ENCODE measurements at regions of chr1 and their contacts with region 1.

Region 1: GRCh38 chr1:93680757-93681550 is 683 bp downstream of the BCAR3 start:
- DNase-seq: peak; percentile 82
- ATAC-seq: peak; percentile 34
- H3K4me3 ChIP-seq: peak overlapping the region; percentile 95
- H3K27ac ChIP-seq: peak overlapping the region; percentile 99
- H3K4me1 ChIP-seq: peaks cover 78% of the 10 kb centered on the region
- H3K27me3 ChIP-seq: no peaks in the 10 kb centered on the region
- CTCF ChIP-seq: peak; percentile 61

Region 2: GRCh38 chr1:92168657-92169056 is 1512.3 kb before region 1 on chr1:
- CTCF ChIA-PET with region 1: no interaction called
- POLR2A ChIA-PET with region 1: no interaction called
- intact Hi-C with region 1: no loop called
- DNase-seq: no peak
- ATAC-seq: no peak
- H3K4me3 ChIP-seq: no peak overlapping the region
- H3K27ac ChIP-seq: no peak overlapping the region
- H3K4me1 ChIP-seq: no peaks in the 10 kb centered on the region
- H3K27me3 ChIP-seq: no peaks in the 10 kb centered on the region
- CTCF ChIP-seq: no peak

Region 3: GRCh38 chr1:93629099-93630059 is 51.6 kb before region 1 on chr1:
- CTCF ChIA-PET with region 1: no interaction called
- POLR2A ChIA-PET with region 1: no interaction called
- intact Hi-C with region 1: loop called (anchors 1 kb)
- DNase-seq: peak; percentile 85
- ATAC-seq: peak; percentile 64
- H3K4me3 ChIP-seq: no peak overlapping the region
- H3K27ac ChIP-seq: peak overlapping the region; percentile 72
- H3K4me1 ChIP-seq: peaks cover 75% of the 10 kb centered on the region
- H3K27me3 ChIP-seq: no peaks in the 10 kb centered on the region
- CTCF ChIP-seq: peak; percentile 88

Region 4: GRCh38 chr1:93692983-93693591 is 12.1 kb after region 1 on chr1:
- CTCF ChIA-PET with region 1: no interaction called
- POLR2A ChIA-PET with region 1: interaction called, 27 read pairs
- intact Hi-C with region 1: loop called (anchors 1 kb)
- DNase-seq: peak; percentile 97
- ATAC-seq: peak; percentile 70
- H3K4me3 ChIP-seq: peak overlapping the region; percentile 43; the same call in 1 of the 2 replicates
- H3K27ac ChIP-seq: peak overlapping the region; percentile 99
- H3K4me1 ChIP-seq: peaks cover 58% of the 10 kb centered on the region
- H3K27me3 ChIP-seq: no peaks in the 10 kb centered on the region
- CTCF ChIP-seq: no peak

Measured in PC-3 (cell line).